ENCODE measurements at regions of chr7 and their contacts with region 1.

Region 1: GRCh38 chr7:70693686-70694360 is 438.1 kb upstream of the GALNT17 start:
- DNase-seq: peak; percentile 51 to 93
- H3K4me3 ChIP-seq: peak overlapping the region; percentile 91
- CTCF ChIP-seq: no peak
- POLR2A ChIP-seq: no peak

Region 2: DNA sequence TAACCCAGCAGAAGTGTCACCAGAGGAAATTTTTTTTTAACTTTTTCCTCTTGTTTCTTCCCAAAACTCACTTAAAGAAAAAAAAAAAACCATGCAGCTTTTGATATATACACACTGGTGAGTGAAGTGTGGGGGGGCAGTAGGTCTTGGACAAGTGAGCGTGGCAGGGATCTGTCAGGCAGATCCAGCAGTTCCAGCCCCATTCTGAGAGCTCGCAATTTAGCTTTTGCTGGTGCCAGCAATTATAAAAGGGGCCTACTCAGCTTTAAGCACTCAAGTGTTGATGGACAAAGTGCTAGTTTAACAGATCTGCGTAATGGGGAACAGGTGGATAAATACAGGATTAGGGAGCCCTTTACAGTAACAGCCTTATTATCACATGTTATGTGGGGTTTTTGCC is 181.1 kb before region 1 on chr7:
- intact Hi-C with region 1: no loop called
- DNase-seq: no peak
- H3K4me3 ChIP-seq: no peak overlapping the region
- CTCF ChIP-seq: no peak
- POLR2A ChIP-seq: no peak

Region 3: DNA sequence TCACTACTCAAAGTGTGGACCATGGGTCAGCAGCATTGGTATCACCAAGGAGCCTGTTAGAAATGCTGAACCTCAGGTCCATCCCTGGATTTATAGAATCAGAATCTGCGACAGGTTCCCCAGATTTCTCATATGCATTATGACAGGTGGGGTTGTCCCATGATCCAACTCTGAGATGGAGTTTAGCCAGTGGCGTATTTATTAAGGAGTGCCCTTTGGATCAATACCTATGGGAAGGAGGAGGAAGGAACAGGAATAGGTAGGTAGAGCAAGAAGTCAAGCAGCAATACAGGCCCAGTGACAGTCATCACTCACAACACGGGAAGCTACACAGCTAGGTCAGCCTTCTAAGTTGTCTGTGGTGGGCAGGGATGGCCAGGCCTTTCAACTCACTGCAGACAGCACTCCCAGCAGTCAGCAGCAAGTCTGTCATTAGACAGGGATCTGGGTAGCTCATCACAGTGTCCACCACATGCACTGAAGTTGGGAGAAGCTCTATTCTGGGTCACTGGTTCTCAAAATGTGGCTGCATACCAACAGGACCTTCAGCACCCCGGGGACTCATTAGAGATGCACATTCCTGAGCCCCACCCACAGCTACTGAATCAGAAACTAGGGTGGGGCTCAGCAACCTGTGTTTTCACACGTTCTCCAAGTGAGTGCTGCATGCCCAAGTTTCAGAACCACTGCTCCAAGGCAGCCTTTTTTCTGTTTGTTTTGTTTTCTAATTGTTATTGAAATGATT is 94.2 kb before region 1 on chr7:
- intact Hi-C with region 1: loop called (anchors 10 kb)
- DNase-seq: no peak
- H3K4me3 ChIP-seq: no peak overlapping the region
- CTCF ChIP-seq: no peak
- POLR2A ChIP-seq: no peak